Testis (tissue), 5 donors: ENCODE measurements at regions of chr2 and their contacts with region 1.

Region 1: GRCh38 chr2:172102391-172103278 is at the start of gene DLX2:
- DNase-seq: peak; percentile 92
- H3K4me3 ChIP-seq: peak within 1 kb of the TSS; percentile 43 to 61
- H3K27ac ChIP-seq: no peak within 1 kb of the TSS
- H3K4me1 ChIP-seq: peaks cover 23% of the 10 kb centered on the region
- H3K27me3 ChIP-seq: peaks cover 7% of the 10 kb centered on the region
- CTCF ChIP-seq: no peak
- POLR2A ChIP-seq: no peak
- total RNA-seq, gene DLX2: 0.99 to 1.1 TPM

Region 2: GRCh38 chr2:171687287-171688128 is 415.1 kb before region 1 on chr2 and contains the start of gene DYNC1I2:
- intact Hi-C with region 1: loop called (anchors 10 kb)
- DNase-seq: peak; percentile 97
- H3K4me3 ChIP-seq: peak within 1 kb of the TSS; percentile 64 to 97
- H3K27ac ChIP-seq: peak within 1 kb of the TSS; percentile 86 to 87
- H3K4me1 ChIP-seq: peaks cover 13% of the 10 kb centered on the region
- H3K27me3 ChIP-seq: no peaks in the 10 kb centered on the region
- CTCF ChIP-seq: peak in 2 of 3 experiments; percentile 5 to 27
- POLR2A ChIP-seq: no peak
- total RNA-seq, gene DYNC1I2: 104 to 106 TPM

Region 3: GRCh38 chr2:171723724-171724683 is 378.6 kb before region 1 on chr2:
- intact Hi-C with region 1: no loop called
- DNase-seq: no peak
- H3K4me3 ChIP-seq: no peak overlapping the region
- H3K27ac ChIP-seq: no peak overlapping the region
- H3K4me1 ChIP-seq: no peaks in the 10 kb centered on the region
- H3K27me3 ChIP-seq: no peaks in the 10 kb centered on the region
- CTCF ChIP-seq: no peak
- POLR2A ChIP-seq: no peak

Region 4: DNA sequence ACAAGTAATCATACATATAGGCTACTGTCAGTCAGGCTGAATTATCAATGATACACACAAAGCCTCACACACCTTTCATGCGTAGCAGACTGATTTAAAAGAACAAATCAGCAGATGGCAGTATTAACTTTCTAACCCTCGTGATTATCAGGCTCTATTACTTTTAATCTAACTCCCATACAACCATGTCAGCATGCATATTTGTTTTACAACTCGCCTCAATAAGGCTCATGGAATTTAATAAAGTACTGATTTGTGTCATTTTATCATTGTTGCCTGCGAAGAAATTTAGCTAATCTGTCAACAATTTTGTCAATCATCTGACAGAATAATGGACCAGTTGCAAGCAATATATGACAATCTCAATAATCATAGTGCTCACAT is 291.4 kb before region 1 on chr2:
- intact Hi-C with region 1: loop called (anchors 10 kb)
- DNase-seq: no peak
- H3K4me3 ChIP-seq: no peak overlapping the region
- H3K27ac ChIP-seq: no peak overlapping the region
- H3K4me1 ChIP-seq: peaks cover 7% of the 10 kb centered on the region
- H3K27me3 ChIP-seq: no peaks in the 10 kb centered on the region
- CTCF ChIP-seq: peak in 2 of 3 experiments; percentile 19 to 29
- POLR2A ChIP-seq: no peak

Region 5: DNA sequence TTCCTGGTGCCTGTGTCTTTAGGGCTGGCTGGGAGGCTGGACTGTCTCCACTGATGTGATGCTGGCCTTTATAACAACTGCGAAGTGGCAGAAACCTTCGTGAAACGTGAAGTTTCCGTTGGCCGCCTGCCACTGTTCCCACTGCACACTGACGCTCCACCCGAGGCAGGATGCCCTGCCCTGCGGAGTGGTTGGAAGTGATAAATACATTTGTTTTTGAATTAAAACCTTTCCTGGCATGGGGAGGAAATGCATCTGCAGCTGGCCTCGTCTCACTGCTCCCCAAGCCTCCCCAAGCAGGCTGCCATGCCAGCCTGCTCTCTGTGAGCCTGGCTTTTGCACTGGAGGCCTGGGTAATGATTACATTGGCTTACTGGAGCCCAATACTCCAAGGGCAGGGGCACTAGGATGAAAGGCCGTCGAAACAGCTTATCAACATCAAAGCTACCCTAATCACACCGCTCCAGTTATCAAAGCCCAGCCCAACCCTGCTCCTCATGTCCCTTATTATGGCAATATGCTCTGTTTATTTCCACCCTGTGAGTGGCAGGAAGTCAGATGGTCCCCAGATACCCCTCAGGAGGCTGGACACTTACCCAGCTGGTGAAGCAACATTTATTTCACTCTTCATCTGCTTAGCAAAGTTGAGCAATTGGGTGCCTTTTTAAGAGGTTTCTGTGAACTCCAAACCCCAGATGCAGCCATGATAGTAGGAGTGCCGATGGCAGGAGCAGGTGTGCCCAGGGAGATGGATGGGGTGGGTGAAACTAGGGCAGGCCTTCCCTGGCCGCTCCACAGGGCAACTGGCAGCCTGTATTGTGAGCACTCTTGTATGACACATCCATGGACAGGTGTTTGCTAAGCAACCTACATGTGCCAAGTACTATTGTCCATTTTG is 227.4 kb after region 1 on chr2:
- intact Hi-C with region 1: no loop called
- DNase-seq: no peak
- H3K4me3 ChIP-seq: no peak overlapping the region
- H3K27ac ChIP-seq: no peak overlapping the region
- H3K4me1 ChIP-seq: no peaks in the 10 kb centered on the region
- H3K27me3 ChIP-seq: no peaks in the 10 kb centered on the region
- CTCF ChIP-seq: no peak
- POLR2A ChIP-seq: no peak